ENCODE measurements at regions of chr20 and their contacts with region 1.

Region 1: GRCh38 chr20:51595058-51595532 is 52.6 kb upstream of the NFATC2 start:
- DNase-seq: peak; percentile 56 to 81
- H3K4me3 ChIP-seq: no peak overlapping the region
- H3K27ac ChIP-seq: no peak overlapping the region
- H3K4me1 ChIP-seq: peaks cover 0 to 8% (median 2%) of the 10 kb centered on the region in 4 experiments; a peak in 5 of 7 replicates
- H3K27me3 ChIP-seq: no peaks in the 10 kb centered on the region
- CTCF ChIP-seq: peak; percentile 92 to 96 (median 94)
- EP300 ChIP-seq: 0 out of 3 replicates have a peak, but pooled peaks of 1 of the 2 experiments have one; percentile 16
- POLR2A ChIP-seq: no peak
- RAD21 ChIP-seq: peak; percentile 96

Region 2: GRCh38 chr20:51372176-51372803 is 222.8 kb before region 1 on chr20:
- CTCF ChIA-PET with region 1: interaction called, 15 read pairs
- POLR2A ChIA-PET with region 1: no interaction called
- DNase-seq: peak; percentile 63 to 85
- H3K4me3 ChIP-seq: no peak overlapping the region
- H3K27ac ChIP-seq: no peak overlapping the region
- H3K4me1 ChIP-seq: peaks cover 2 to 4% (median 2%) of the 10 kb centered on the region in 4 experiments; a peak in 3 of 7 replicates
- H3K27me3 ChIP-seq: no peaks in the 10 kb centered on the region
- CTCF ChIP-seq: peak; percentile 78 to 92 (median 86)
- EP300 ChIP-seq: no peak
- POLR2A ChIP-seq: no peak
- RAD21 ChIP-seq: peak; percentile 96

Region 3: DNA sequence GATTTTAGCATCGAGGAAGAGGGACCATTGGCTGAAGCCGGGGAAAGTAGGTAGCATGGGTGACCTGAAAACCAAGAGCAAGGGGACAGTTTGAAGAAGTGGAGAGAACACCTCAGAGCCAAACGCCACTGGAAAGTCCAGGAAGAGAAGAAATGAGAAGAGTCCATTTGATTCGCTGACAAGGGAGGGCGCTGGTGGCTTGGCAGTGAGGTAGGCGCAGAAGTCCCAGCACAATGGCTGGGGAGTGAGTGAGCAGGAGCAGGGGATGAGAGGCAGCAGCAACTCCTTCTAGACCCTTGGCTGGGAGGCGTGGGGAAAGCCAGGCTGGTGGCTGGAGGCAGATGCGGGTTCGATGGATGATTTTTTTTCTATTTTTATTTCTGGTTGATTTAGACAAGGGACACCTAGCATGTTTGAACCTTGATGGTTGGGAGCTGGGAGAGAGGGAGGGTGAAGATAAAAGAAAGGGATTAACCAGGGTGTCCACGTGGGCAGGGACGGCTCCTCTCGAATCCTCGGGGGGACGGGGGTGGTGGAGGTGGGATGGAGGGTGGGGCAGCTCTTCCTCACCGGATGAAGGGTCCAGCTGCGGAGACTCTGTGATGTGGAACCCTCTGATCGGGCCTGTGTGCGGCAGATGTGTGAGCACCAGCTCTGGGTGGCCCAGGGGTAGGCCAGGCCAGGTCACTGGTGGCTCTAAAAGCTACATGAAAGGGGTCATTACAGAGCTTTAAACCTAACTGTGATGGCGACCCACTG is 216.7 kb before region 1 on chr20:
- CTCF ChIA-PET with region 1: interaction called, 15 read pairs
- POLR2A ChIA-PET with region 1: no interaction called
- DNase-seq: peak in 1 of 2 experiments; percentile 58
- H3K4me3 ChIP-seq: no peak overlapping the region
- H3K27ac ChIP-seq: no peak overlapping the region
- H3K4me1 ChIP-seq: no peaks in the 10 kb centered on the region
- H3K27me3 ChIP-seq: no peaks in the 10 kb centered on the region
- CTCF ChIP-seq: peak; percentile 68 to 69 (median 68)
- EP300 ChIP-seq: no peak
- POLR2A ChIP-seq: no peak
- RAD21 ChIP-seq: peak; percentile 89 to 92

Region 4: DNA sequence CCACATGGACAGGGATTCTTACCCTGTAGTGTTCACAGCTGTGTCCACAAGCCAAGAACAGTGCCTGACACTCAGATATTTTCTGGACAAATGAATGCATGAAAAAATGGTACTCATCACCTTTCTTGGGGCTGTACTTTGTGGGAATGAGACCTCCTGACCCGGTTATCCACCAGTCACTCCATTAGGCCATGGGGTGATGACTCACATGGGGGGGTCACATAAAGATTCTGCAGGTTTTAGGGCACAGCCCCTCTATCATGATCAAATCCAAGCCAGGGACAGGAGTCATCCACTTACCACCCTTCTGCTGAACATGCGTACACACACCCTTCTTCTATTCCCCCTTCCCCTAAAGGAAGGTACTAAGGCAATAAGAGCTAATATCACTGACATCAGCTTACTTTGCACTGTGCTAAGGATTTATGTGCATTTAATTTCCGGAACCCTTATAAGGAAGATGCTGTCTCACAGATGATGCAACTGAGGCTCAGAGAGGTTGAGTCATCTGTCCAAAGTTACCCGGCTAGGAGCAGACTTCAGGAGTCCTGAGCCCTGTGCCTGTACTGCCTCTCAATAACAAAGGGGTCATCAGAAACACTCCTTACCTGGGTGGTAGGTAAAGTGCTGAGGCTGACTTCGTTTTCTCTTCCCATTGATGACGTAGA is 160.4 kb before region 1 on chr20:
- CTCF ChIA-PET with region 1: no interaction called
- POLR2A ChIA-PET with region 1: no interaction called
- DNase-seq: no peak
- H3K4me3 ChIP-seq: no peak overlapping the region
- H3K27ac ChIP-seq: no peak overlapping the region
- H3K4me1 ChIP-seq: peaks cover 0 to 4% (median 0%) of the 10 kb centered on the region in 4 experiments; a peak in 1 of 7 replicates
- H3K27me3 ChIP-seq: no peaks in the 10 kb centered on the region
- CTCF ChIP-seq: no peak
- EP300 ChIP-seq: no peak
- POLR2A ChIP-seq: no peak
- RAD21 ChIP-seq: no peak

Region 5: GRCh38 chr20:51616060-51616459 is 21.0 kb after region 1 on chr20:
- CTCF ChIA-PET with region 1: interaction called, 26 read pairs
- POLR2A ChIA-PET with region 1: no interaction called
- DNase-seq: no peak
- H3K4me3 ChIP-seq: no peak overlapping the region
- H3K27ac ChIP-seq: no peak overlapping the region
- H3K4me1 ChIP-seq: no peaks in the 10 kb centered on the region; a peak in 1 of 7 replicates
- H3K27me3 ChIP-seq: no peaks in the 10 kb centered on the region
- CTCF ChIP-seq: peak; percentile 46 to 47 (median 47); a peak in 3 of 4 replicates
- EP300 ChIP-seq: no peak
- POLR2A ChIP-seq: no peak
- RAD21 ChIP-seq: peak; percentile 42 to 43; a peak in 3 of 4 replicates

Region 6: DNA sequence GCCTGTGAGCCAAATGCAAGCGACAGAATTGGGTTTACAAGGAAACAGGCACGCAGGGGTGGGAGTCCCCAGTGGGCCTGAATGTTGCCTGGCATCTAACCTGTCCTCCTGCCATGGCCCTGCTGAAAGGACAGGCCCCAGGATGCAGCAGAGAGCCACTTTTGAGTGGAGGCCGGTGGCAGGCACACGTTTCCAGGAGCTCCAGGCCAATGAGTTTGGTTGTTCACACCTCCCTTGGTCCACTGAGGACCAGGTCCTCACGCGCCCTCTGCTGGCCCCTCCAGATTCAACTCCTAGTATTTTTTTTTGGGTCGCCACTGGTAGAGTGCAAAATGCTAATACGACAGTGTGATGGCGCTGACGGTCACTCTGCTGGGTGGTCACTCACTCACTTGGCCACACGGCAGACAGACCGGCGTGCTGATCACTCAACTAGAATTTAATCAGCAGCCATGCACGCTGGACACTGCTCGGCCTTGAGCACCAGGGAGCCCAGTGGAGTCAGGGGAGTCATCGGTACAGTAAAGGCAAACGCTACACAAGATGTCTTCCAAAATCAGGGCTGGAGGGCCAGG is 29.1 kb after region 1 on chr20:
- CTCF ChIA-PET with region 1: interaction called, 23 read pairs
- POLR2A ChIA-PET with region 1: no interaction called
- DNase-seq: peak; percentile 53 to 94
- H3K4me3 ChIP-seq: no peak overlapping the region
- H3K27ac ChIP-seq: no peak overlapping the region
- H3K4me1 ChIP-seq: peaks cover 0 to 2% (median 0%) of the 10 kb centered on the region in 4 experiments; a peak in 1 of 7 replicates
- H3K27me3 ChIP-seq: no peaks in the 10 kb centered on the region
- CTCF ChIP-seq: peak; percentile 63 to 91 (median 88)
- EP300 ChIP-seq: no peak
- POLR2A ChIP-seq: no peak
- RAD21 ChIP-seq: peak; percentile 72 to 85

Region 7: DNA sequence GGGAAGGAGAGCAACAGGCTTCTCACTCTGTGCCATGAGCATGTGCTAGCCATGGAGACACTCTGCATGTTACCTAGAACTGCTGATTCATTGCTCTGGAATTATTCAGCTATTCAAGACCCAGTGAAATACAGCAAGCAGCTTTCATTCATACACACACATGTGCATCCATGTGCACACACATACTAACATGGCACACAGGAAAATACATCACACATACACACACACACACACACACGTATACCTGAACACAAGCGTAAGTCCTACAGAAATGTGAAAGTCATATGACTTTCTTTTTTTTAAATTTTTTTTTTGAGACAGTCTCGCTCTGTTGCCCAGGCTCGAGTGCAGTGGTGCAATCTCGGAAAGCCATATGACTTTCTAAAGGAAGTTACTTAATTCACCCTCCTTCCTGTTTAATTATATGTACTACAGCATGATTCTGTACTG is 55.6 kb after region 1 on chr20:
- CTCF ChIA-PET with region 1: no interaction called
- POLR2A ChIA-PET with region 1: no interaction called
- DNase-seq: no peak
- H3K4me3 ChIP-seq: no peak overlapping the region
- H3K27ac ChIP-seq: no peak overlapping the region
- H3K4me1 ChIP-seq: no peaks in the 10 kb centered on the region
- H3K27me3 ChIP-seq: no peaks in the 10 kb centered on the region
- CTCF ChIP-seq: no peak
- EP300 ChIP-seq: no peak
- POLR2A ChIP-seq: no peak
- RAD21 ChIP-seq: no peak

Region 8: DNA sequence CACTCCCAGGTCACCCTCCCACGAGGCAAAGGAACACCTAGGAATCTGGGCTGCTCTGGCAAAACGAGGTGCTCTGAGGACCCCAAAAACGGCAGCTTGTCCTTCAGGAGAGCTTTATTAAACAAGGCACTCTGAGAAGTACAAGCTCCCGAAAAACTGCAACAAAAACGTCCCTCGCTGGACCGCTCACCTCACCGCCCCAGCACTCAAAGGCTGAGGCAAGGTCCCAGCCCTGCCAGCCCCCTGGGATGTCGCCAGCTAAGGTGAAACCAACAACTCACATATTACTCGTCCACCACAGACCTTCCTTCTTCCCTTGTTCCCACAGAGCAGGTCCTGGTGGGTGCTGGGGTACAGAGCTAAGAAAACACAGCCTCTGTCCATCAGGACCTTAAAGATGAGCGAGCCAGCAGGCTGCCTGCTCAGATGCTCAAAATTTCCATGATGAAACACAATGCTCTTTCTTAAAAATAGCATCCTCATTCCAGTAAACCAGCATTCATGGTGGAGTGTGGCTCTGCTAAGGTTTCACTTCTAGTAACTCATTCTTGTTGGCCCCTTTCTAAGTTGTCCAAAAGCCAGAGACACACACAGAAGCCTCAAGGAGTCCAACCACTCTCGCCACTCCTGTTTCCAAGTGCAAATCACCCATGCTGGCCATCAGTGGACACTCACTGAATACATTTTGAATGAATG is 137.1 kb after region 1 on chr20:
- CTCF ChIA-PET with region 1: no interaction called
- POLR2A ChIA-PET with region 1: no interaction called
- DNase-seq: no peak
- H3K4me3 ChIP-seq: no peak overlapping the region
- H3K27ac ChIP-seq: no peak overlapping the region
- H3K4me1 ChIP-seq: 0 out of 7 replicates have a peak, but pooled peaks cover 0 to 9% (median 0%) of the 10 kb centered on the region in 4 experiments
- H3K27me3 ChIP-seq: no peaks in the 10 kb centered on the region
- CTCF ChIP-seq: no peak
- EP300 ChIP-seq: no peak
- POLR2A ChIP-seq: no peak
- RAD21 ChIP-seq: no peak

Measured in H1 (cell line).